A673 (cell line): ENCODE measurements at regions of chr11 and their contacts with region 1.

Region 1: GRCh38 chr11:17354601-17354991 is 3.0 kb downstream of the NCR3LG1 start:
- DNase-seq: peak; percentile 84
- H3K4me3 ChIP-seq: peak overlapping the region; percentile 56
- H3K27ac ChIP-seq: no peak overlapping the region
- H3K4me1 ChIP-seq: peaks cover 4% of the 10 kb centered on the region
- H3K27me3 ChIP-seq: no peaks in the 10 kb centered on the region
- CTCF ChIP-seq: peak; percentile 74

Region 2: GRCh38 chr11:17077520-17078401 is 276.8 kb before region 1 on chr11 and contains the start of gene RPS13:
- CTCF ChIA-PET with region 1: no interaction called
- POLR2A ChIA-PET with region 1: no interaction called
- intact Hi-C with region 1: loop called (anchors 5 kb)
- DNase-seq: peak; percentile 99
- H3K4me3 ChIP-seq: peak within 1 kb of the TSS; percentile 89
- H3K27ac ChIP-seq: peak within 1 kb of the TSS; percentile 94
- H3K4me1 ChIP-seq: peaks cover 14% of the 10 kb centered on the region
- H3K27me3 ChIP-seq: no peaks in the 10 kb centered on the region
- CTCF ChIP-seq: no peak
- total RNA-seq, gene RPS13: 704 and 746 TPM in 2 replicates